B cell (primary cell): ENCODE measurements at regions of chr11 and their contacts with region 1.

Region 1: DNA sequence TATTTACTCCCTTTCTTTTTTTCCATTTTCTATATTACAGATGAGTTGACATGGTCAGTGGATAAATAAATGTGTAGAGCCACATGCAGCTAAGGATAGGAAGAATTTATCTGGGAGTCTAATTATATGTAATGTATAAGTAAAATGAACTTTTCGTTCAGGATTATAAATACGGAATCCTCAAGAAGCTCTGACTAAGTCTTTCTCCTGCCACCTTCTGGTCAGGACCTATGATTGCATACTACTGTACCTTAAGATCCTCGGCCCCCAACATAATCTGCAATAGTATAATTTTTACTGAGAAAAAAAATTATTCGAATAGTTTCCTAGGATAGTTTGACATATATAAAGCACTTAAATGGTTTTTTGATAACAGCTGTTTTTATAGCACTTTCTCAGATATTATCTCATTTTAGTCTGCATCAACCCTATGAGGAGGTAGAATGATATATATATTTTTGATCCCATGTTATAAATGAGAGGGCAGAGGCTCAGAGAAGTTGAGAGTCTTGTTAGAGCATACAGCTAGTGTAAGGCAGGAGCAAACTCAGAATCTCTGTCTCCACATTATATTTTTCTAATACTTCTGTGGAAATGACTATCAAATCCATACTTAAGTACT is 36.1 kb downstream of the CCDC90B start:
- DNase-seq: peak; percentile 62
- ATAC-seq: peak; percentile 63
- H3K4me3 ChIP-seq: no peak overlapping the region
- H3K4me3 Mint-ChIP-seq: no peak overlapping the region
- H3K27ac ChIP-seq: no peak overlapping the region
- H3K27ac Mint-ChIP-seq: no peak overlapping the region
- H3K4me1 ChIP-seq: peaks cover 4 to 6% of the 10 kb centered on the region in 2 donors
- H3K4me1 Mint-ChIP-seq: peaks cover 14% of the 10 kb centered on the region
- H3K27me3 ChIP-seq: no peaks in the 10 kb centered on the region
- H3K27me3 Mint-ChIP-seq: no peaks in the 10 kb centered on the region
- CTCF ChIP-seq: peak; percentile 83

Region 2: DNA sequence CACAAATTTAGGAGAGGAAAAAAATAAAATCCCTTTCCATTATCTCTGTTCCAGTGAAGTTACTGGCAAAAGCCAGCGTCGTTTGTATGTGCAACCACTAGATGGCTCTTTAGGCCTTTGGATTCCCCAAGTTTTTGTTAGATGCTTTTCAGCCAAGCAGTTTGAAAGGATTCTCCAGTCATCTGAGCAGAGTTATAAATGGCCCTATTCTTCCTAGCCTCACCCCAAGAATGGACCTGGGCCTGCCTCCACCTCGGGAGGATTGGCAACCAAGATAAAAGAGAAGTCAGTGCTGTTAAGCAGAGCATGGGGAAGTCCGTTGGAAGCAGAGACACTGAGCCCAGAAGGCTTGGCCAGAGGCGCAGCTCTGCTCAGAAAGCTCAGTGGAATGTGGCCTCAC is 531.8 kb before region 1 on chr11:
- CTCF ChIA-PET with region 1: interaction called, 7 read pairs
- POLR2A ChIA-PET with region 1: no interaction called
- intact Hi-C with region 1: loop called (anchors 5 kb)
- DNase-seq: peak; percentile 39
- ATAC-seq: no peak
- H3K4me3 ChIP-seq: no peak overlapping the region
- H3K4me3 Mint-ChIP-seq: no peak overlapping the region
- H3K27ac ChIP-seq: no peak overlapping the region
- H3K27ac Mint-ChIP-seq: no peak overlapping the region
- H3K4me1 ChIP-seq: no peaks in the 10 kb centered on the region
- H3K4me1 Mint-ChIP-seq: peaks cover 2% of the 10 kb centered on the region
- H3K27me3 ChIP-seq: peaks cover 0 to under 1% (median 0%) of the 10 kb centered on the region in 4 experiments
- H3K27me3 Mint-ChIP-seq: no peaks in the 10 kb centered on the region
- CTCF ChIP-seq: peak; percentile 76

Region 3: GRCh38 chr11:82906244-82906654 is 343.8 kb before region 1 on chr11:
- CTCF ChIA-PET with region 1: interaction called, 135 read pairs
- POLR2A ChIA-PET with region 1: no interaction called
- intact Hi-C with region 1: loop called (anchors 1 kb)
- DNase-seq: peak; percentile 64
- ATAC-seq: no peak
- H3K4me3 ChIP-seq: no peak overlapping the region
- H3K4me3 Mint-ChIP-seq: no peak overlapping the region
- H3K27ac ChIP-seq: no peak overlapping the region
- H3K27ac Mint-ChIP-seq: no peak overlapping the region
- H3K4me1 ChIP-seq: peaks cover 17 to 32% of the 10 kb centered on the region in 2 donors
- H3K4me1 Mint-ChIP-seq: peaks cover 32% of the 10 kb centered on the region
- H3K27me3 ChIP-seq: no peaks in the 10 kb centered on the region
- H3K27me3 Mint-ChIP-seq: no peaks in the 10 kb centered on the region
- CTCF ChIP-seq: peak; percentile 84

Region 4: GRCh38 chr11:83087035-83087434 is 163.0 kb before region 1 on chr11:
- CTCF ChIA-PET with region 1: interaction called, 17 read pairs
- POLR2A ChIA-PET with region 1: no interaction called
- intact Hi-C with region 1: no loop called
- DNase-seq: peak; percentile 19
- ATAC-seq: peak; percentile 24
- H3K4me3 ChIP-seq: no peak overlapping the region
- H3K4me3 Mint-ChIP-seq: no peak overlapping the region
- H3K27ac ChIP-seq: no peak overlapping the region
- H3K27ac Mint-ChIP-seq: peak overlapping the region; percentile 0
- H3K4me1 ChIP-seq: no peaks in the 10 kb centered on the region
- H3K4me1 Mint-ChIP-seq: peaks cover 12% of the 10 kb centered on the region
- H3K27me3 ChIP-seq: no peaks in the 10 kb centered on the region
- H3K27me3 Mint-ChIP-seq: no peaks in the 10 kb centered on the region
- CTCF ChIP-seq: peak; percentile 24

Region 5: GRCh38 chr11:83456075-83456474 is 206.0 kb after region 1 on chr11:
- CTCF ChIA-PET with region 1: no interaction called
- POLR2A ChIA-PET with region 1: no interaction called
- intact Hi-C with region 1: no loop called
- DNase-seq: no peak
- ATAC-seq: no peak
- H3K4me3 ChIP-seq: no peak overlapping the region
- H3K4me3 Mint-ChIP-seq: no peak overlapping the region
- H3K27ac ChIP-seq: no peak overlapping the region
- H3K27ac Mint-ChIP-seq: no peak overlapping the region
- H3K4me1 ChIP-seq: no peaks in the 10 kb centered on the region
- H3K4me1 Mint-ChIP-seq: no peaks in the 10 kb centered on the region
- H3K27me3 ChIP-seq: no peaks in the 10 kb centered on the region
- H3K27me3 Mint-ChIP-seq: peaks cover 5% of the 10 kb centered on the region
- CTCF ChIP-seq: no peak